ENCODE measurements at regions of chr18 and their contacts with region 1.

Region 1: DNA sequence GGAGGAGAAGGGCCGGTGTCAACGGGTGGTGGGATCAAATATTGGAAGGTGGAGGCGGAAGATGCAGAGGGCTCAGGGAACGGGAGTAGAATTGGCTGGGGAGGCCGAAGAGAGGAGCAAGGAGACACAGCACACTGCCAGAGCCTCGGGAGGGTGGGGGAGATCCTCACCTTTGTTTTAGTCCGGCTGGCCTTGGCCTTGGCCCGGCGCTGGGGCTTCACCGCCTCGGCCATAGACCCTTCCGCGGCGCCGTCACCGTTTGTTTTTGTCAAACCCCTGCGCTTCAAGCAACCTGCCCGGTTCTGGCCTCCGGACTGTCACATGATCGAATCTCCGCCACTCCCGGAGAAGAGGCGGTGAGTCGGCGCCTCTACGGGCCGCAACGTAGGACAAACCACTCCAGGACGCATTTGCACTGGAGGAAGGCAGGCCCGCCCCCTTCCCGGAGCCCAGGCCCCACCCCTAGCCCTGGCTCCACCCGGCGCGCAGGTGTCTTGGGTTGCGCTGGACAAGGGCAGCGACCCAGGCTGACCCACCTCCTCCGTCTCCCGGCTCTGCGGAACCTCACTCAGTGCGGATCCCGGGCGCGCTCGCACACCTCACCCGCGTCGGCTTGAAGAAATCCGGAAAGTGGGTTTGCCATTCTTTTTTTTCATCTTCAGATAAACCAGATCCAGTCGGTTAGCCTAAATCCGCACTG is at the start of gene EPG5:
- DNase-seq: peak; percentile 68
- ATAC-seq: peak; percentile 95
- H3K4me3 ChIP-seq: peak within 1 kb of the TSS; percentile 97
- H3K27ac ChIP-seq: peak within 1 kb of the TSS; percentile 72
- H3K4me1 ChIP-seq: no peaks in the 10 kb centered on the region
- H3K27me3 ChIP-seq: no peaks in the 10 kb centered on the region
- CTCF ChIP-seq: no peak
- EP300 ChIP-seq: no peak
- POLR2A ChIP-seq: peak; percentile 79
- RAD21 ChIP-seq: no peak
- polyA plus RNA-seq, gene EPG5: 1.9 to 2.3 TPM

Region 2: DNA sequence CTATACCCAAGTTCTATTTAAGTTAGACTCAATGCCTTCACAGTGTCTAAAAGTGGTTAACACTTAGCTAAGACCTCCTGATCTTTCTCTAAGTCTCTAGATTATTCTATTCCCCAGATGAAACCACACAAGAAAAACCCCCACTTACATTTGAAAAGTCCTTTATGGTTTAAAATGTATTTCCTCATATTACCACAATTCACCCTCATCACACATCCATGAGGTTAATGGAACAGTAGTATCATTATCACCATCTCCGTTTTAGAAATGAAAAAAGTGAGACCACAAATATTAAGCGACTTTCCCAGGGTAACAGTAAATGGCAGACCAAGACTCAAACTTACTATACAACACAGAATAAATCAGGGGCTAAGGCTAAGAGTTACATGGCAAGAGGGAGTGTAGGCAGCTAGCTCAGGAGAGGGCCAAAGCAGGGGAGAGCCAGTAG is 28.6 kb before region 1 on chr18:
- CTCF ChIA-PET with region 1: interaction called, 3 read pairs
- POLR2A ChIA-PET with region 1: interaction called, 3 read pairs
- RAD21 ChIA-PET with region 1: interaction called, 3 read pairs
- SMC1A ChIA-PET with region 1: interaction called, 15 read pairs
- in situ Hi-C with region 1: no loop called
- intact Hi-C with region 1: no loop called
- DNase-seq: peak; percentile 20
- ATAC-seq: peak; percentile 86
- H3K4me3 ChIP-seq: no peak overlapping the region
- H3K27ac ChIP-seq: no peak overlapping the region
- H3K4me1 ChIP-seq: peaks cover 5% of the 10 kb centered on the region
- H3K27me3 ChIP-seq: no peaks in the 10 kb centered on the region
- CTCF ChIP-seq: no peak
- EP300 ChIP-seq: peak; percentile 67 to 76
- POLR2A ChIP-seq: no peak
- RAD21 ChIP-seq: no peak

Region 3: DNA sequence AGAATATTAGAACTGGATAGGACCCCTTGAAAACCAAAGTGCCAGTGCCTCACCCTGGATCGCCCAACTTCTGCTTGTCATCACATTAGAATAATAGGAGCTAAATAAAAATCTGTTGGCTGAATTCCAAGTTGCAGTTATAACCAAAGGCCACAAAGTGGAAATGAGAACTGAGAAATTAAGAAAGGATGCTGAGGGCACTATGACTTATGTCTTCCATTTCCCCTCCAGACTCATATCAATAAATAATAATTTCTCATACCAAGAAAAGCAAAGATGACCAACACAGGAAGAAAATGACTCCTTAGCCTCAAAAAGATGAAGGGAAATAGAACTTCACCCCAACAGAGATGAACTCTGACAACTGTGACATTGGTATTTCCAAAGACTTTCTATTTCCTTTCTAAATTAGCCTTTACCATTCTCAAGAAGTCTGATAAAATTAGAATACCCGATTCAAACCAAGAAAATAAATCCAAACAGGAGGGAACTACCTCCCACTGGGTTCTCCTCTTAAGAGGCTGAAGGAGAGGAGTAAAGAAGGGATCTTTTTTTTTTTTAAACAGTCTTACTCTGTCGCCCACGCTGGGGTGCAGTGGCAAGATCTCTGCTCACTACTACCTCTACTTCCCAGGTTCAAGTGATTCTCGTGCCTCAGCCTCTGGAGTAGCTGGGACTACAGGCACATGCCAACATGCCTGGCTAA is 46.5 kb after region 1 on chr18:
- CTCF ChIA-PET with region 1: no interaction called
- POLR2A ChIA-PET with region 1: no interaction called
- RAD21 ChIA-PET with region 1: no interaction called
- SMC1A ChIA-PET with region 1: no interaction called
- in situ Hi-C with region 1: no loop called
- intact Hi-C with region 1: no loop called
- DNase-seq: no peak
- ATAC-seq: peak; percentile 86
- H3K4me3 ChIP-seq: no peak overlapping the region
- H3K27ac ChIP-seq: no peak overlapping the region
- H3K4me1 ChIP-seq: peaks cover 13% of the 10 kb centered on the region
- H3K27me3 ChIP-seq: no peaks in the 10 kb centered on the region; a peak in 1 of 4 replicates
- CTCF ChIP-seq: no peak
- EP300 ChIP-seq: peak in 1 of 2 experiments; percentile 45; a peak in 2 of 4 replicates
- POLR2A ChIP-seq: no peak
- RAD21 ChIP-seq: no peak

Region 4: GRCh38 chr18:46110406-46110805 is 143.2 kb after region 1 on chr18:
- CTCF ChIA-PET with region 1: no interaction called
- POLR2A ChIA-PET with region 1: no interaction called
- RAD21 ChIA-PET with region 1: no interaction called
- SMC1A ChIA-PET with region 1: no interaction called
- in situ Hi-C with region 1: no loop called
- intact Hi-C with region 1: no loop called
- DNase-seq: no peak
- ATAC-seq: no peak
- H3K4me3 ChIP-seq: no peak overlapping the region
- H3K27ac ChIP-seq: no peak overlapping the region
- H3K4me1 ChIP-seq: no peaks in the 10 kb centered on the region
- H3K27me3 ChIP-seq: no peaks in the 10 kb centered on the region
- CTCF ChIP-seq: no peak
- EP300 ChIP-seq: no peak
- POLR2A ChIP-seq: no peak
- RAD21 ChIP-seq: no peak

Region 5: GRCh38 chr18:46155641-46156051 is 188.5 kb after region 1 on chr18:
- CTCF ChIA-PET with region 1: no interaction called
- POLR2A ChIA-PET with region 1: no interaction called
- RAD21 ChIA-PET with region 1: no interaction called
- SMC1A ChIA-PET with region 1: no interaction called
- in situ Hi-C with region 1: no loop called
- intact Hi-C with region 1: no loop called
- DNase-seq: no peak
- ATAC-seq: peak; percentile 37; the same call in 1 of the 3 replicates
- H3K4me3 ChIP-seq: no peak overlapping the region
- H3K27ac ChIP-seq: no peak overlapping the region
- H3K4me1 ChIP-seq: peaks cover 8% of the 10 kb centered on the region; the same call in 1 of the 2 replicates
- H3K27me3 ChIP-seq: no peaks in the 10 kb centered on the region
- CTCF ChIP-seq: no peak
- EP300 ChIP-seq: no peak
- POLR2A ChIP-seq: no peak
- RAD21 ChIP-seq: no peak